ENCODE measurements at regions of chr22 and their contacts with region 1.

Region 1: DNA sequence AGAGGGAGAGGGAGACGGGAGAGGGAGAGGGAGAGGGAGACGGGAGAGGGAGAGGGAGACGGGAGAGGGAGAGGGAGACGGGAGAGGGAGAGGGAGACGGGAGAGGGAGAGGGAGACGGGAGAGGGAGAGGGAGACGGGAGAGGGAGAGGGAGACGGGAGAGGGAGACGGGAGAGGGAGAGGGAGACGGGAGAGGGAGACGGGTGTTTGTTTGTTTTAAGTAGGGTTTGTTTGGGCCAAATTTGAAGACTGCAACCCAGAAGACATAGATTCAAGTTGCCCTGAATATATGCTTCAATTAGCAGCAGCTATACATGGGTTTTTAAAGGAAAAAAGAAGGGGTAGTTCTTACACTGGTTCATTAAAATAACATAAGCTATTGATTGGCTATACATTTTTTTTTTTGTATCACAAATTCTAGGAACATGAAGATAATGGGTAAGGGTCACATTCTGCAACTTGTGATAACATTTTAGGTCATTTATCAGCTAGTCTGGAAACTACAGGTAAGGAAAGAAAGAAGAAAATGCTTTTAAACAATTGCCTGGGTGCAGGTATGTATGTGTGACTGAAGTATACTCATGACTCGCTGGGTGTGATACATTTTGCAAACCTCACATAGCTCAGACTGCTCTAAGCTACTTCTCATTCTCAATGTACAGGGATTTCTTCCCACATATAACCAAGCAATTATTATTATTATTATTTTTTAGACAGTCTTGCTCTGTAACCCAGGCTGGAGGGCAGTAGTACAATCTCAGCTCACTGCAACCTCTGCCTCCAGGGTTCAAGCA is 67.3 kb downstream of the MCHR1 start:
- DNase-seq: no peak
- H3K4me3 ChIP-seq: 0 out of 8 replicates have a peak overlapping the region, but pooled peaks of 1 of the 4 experiments have one; percentile 8
- H3K27ac ChIP-seq: no peak overlapping the region
- H3K4me1 ChIP-seq: peaks cover 3 to 11% (median 6%) of the 10 kb centered on the region in 4 experiments
- H3K27me3 ChIP-seq: no peaks in the 10 kb centered on the region
- CTCF ChIP-seq: no peak
- EP300 ChIP-seq: no peak
- POLR2A ChIP-seq: no peak
- RAD21 ChIP-seq: no peak

Region 2: DNA sequence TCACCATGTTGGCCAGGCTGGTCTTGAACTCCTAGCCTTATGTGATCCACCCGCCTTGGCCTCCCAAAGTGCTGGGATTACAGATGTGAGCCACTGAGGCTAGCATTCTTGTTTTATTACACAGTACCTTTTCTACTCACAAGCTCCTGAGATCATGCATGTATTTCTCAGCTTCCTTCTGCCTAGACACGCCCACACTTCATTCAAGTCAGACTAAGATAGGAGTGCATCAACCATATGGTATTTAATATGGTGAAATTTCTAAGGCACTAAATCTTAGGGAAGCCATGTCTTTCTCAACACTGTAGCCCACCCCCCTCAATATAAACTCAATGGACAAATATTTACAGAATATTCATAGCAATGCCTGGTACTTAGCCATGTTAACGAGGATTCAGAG is 10.4 kb after region 1 on chr22:
- CTCF ChIA-PET with region 1: interaction called, 25 read pairs
- POLR2A ChIA-PET with region 1: no interaction called
- DNase-seq: no peak
- H3K4me3 ChIP-seq: no peak overlapping the region
- H3K27ac ChIP-seq: no peak overlapping the region
- H3K4me1 ChIP-seq: peaks cover 0 to 8% (median 2%) of the 10 kb centered on the region in 4 experiments; a peak in 2 of 7 replicates
- H3K27me3 ChIP-seq: no peaks in the 10 kb centered on the region
- CTCF ChIP-seq: no peak
- EP300 ChIP-seq: no peak
- POLR2A ChIP-seq: no peak
- RAD21 ChIP-seq: no peak

Region 3: GRCh38 chr22:40808018-40808841 is 61.6 kb after region 1 on chr22:
- CTCF ChIA-PET with region 1: no interaction called
- POLR2A ChIA-PET with region 1: no interaction called
- DNase-seq: no peak
- H3K4me3 ChIP-seq: no peak overlapping the region
- H3K27ac ChIP-seq: no peak overlapping the region
- H3K4me1 ChIP-seq: no peaks in the 10 kb centered on the region
- H3K27me3 ChIP-seq: no peaks in the 10 kb centered on the region
- CTCF ChIP-seq: no peak
- EP300 ChIP-seq: no peak
- POLR2A ChIP-seq: no peak
- RAD21 ChIP-seq: no peak

Measured in H1 (cell line).